PC-9 (cell line): ENCODE measurements at regions of chr5 and their contacts with region 1.

Region 1: GRCh38 chr5:28451483-28451882 is 1413.1 kb upstream of the CDH9 start:
- DNase-seq: no peak
- H3K4me3 ChIP-seq: no peak overlapping the region
- H3K27ac ChIP-seq: no peak overlapping the region
- H3K4me1 ChIP-seq: no peaks in the 10 kb centered on the region
- H3K27me3 ChIP-seq: no peaks in the 10 kb centered on the region
- CTCF ChIP-seq: no peak

Region 2: DNA sequence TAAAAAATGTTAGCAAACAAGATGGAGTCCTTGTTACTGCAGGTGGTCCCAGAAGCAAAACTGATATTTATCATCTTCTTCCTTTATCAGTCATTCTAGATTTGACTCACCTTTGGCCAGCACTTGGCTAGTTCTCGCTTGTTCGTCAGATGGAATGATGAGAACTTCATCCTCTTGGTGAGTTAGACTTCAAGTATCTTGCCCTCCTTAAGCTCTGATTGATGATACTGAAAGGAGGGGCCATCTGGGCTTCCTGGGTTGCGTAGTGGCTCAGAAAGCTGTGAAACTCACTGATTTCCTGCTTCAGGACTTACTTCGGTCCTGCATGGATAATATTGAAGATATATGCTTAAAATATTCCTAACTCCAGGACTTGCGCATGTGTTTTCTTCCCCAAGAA is 164.9 kb before region 1 on chr5:
- CTCF ChIA-PET with region 1: no interaction called
- POLR2A ChIA-PET with region 1: no interaction called
- intact Hi-C with region 1: loop called (anchors 5 kb)
- DNase-seq: no peak
- H3K4me3 ChIP-seq: no peak overlapping the region
- H3K27ac ChIP-seq: no peak overlapping the region
- H3K4me1 ChIP-seq: no peaks in the 10 kb centered on the region
- H3K27me3 ChIP-seq: no peaks in the 10 kb centered on the region
- CTCF ChIP-seq: no peak

Region 3: GRCh38 chr5:28542987-28543386 is 91.5 kb after region 1 on chr5:
- CTCF ChIA-PET with region 1: no interaction called
- POLR2A ChIA-PET with region 1: no interaction called
- intact Hi-C with region 1: no loop called
- DNase-seq: peak; percentile 43 to 48
- H3K4me3 ChIP-seq: no peak overlapping the region
- H3K27ac ChIP-seq: no peak overlapping the region
- H3K4me1 ChIP-seq: no peaks in the 10 kb centered on the region
- H3K27me3 ChIP-seq: no peaks in the 10 kb centered on the region
- CTCF ChIP-seq: no peak

Region 4: GRCh38 chr5:29016067-29016466 is 564.6 kb after region 1 on chr5:
- CTCF ChIA-PET with region 1: no interaction called
- POLR2A ChIA-PET with region 1: no interaction called
- intact Hi-C with region 1: no loop called
- DNase-seq: peak in 1 of 2 experiments; percentile 32
- H3K4me3 ChIP-seq: no peak overlapping the region
- H3K27ac ChIP-seq: no peak overlapping the region
- H3K4me1 ChIP-seq: no peaks in the 10 kb centered on the region
- H3K27me3 ChIP-seq: no peaks in the 10 kb centered on the region
- CTCF ChIP-seq: no peak